ENCODE measurements at regions of chr17 and their contacts with region 1.

Region 1: DNA sequence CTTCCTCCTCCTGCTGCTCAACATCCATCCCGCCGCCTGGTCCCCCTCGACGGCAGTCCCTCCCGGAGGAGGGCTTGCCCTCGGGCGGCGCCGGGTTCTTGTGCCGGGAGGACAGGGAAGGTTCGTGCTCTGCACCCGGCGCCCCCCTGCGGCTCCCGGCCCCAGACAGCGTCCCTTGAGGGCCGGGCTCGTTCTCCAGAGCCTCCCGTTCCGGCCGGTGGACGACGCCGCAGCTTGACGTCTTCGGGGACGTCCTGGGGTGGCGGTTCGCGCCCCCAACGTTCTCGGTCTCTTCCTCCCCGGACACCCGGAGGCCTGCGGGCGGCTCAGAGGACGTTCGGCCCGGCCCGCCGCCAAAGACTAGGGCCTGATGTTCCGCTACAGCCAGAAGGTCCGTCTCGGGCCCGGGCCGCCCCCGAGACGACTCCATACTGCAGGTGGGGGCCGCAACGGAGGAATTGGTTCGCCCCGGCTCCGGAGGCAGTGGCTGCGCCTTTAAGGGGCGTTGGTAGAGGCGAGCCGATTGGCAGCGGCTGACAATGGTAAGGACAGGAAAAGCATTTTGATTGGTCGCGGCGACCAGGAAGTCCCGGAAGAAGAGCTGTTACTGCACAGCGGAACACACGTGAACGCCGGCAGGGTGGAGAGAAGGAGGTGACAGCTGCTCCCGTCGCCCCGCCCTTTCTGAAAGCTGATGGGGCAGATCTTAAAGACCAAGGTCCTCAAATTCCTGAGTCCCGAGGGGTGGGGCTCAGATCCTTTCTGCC is at the start of gene BORCS6:
- DNase-seq: peak; percentile 72 to 97 (median 82)
- ATAC-seq: peak; percentile 80
- H3K4me3 ChIP-seq: peak within 1 kb of the TSS; percentile 88
- H3K27ac ChIP-seq: peak within 1 kb of the TSS; percentile 85
- H3K4me1 ChIP-seq: peaks cover 31 to 39% of the 10 kb centered on the region in 2 experiments
- H3K27me3 ChIP-seq: no peaks in the 10 kb centered on the region
- CTCF ChIP-seq: peak in 1 of 3 experiments; percentile 0; a peak in 1 of 6 replicates
- EP300 ChIP-seq: no peak
- POLR2A ChIP-seq: peak; percentile 73
- RAD21 ChIP-seq: no peak
- polyA plus RNA-seq, gene BORCS6: 0.01 to 0.08 TPM

Region 2: DNA sequence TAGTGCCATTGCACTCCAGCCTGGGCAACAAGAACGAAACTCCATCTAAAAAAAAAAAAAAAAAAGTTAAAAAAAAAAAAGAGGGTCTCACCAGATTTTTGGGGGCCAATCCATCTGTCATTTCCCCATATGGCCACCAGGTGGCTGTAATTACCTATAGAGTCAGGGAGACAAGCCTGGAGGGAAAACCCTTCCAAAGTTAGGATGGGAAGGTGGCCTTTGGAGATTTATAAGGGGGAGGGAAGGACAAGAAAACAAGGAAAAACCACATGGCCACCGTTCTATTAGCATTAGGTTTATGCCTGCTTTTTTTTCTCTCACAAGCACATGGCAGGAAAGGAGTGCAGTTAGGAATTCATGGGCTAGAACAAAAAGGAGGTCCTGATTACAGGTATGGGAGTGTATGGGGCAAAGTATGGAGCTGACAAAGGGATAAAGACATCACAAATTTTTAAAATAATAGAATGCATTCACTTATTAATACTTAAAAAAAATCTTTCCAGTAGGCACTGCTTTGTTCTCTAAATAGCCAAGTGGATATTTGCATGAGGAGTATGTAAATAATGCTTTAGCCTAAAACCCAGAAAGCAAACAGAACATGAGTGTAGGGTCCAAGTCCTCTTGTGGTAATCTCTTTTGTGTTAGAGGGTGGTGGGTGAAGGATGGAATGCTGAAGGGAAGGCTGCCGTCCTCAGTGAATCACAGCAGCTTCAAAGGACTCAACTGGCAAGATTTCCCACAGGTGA is 327.0 kb before region 1 on chr17:
- CTCF ChIA-PET with region 1: no interaction called
- POLR2A ChIA-PET with region 1: no interaction called
- in situ Hi-C with region 1: no loop called
- intact Hi-C with region 1: no loop called
- DNase-seq: peak; percentile 30 to 48 (median 41)
- ATAC-seq: no peak
- H3K4me3 ChIP-seq: no peak overlapping the region
- H3K27ac ChIP-seq: no peak overlapping the region
- H3K4me1 ChIP-seq: peaks cover 6 to 10% of the 10 kb centered on the region in 2 experiments; a peak in 4 of 5 replicates
- H3K27me3 ChIP-seq: no peaks in the 10 kb centered on the region
- CTCF ChIP-seq: peak; percentile 53 to 69 (median 60)
- EP300 ChIP-seq: no peak
- POLR2A ChIP-seq: no peak
- RAD21 ChIP-seq: peak; percentile 55 to 69

Region 3: DNA sequence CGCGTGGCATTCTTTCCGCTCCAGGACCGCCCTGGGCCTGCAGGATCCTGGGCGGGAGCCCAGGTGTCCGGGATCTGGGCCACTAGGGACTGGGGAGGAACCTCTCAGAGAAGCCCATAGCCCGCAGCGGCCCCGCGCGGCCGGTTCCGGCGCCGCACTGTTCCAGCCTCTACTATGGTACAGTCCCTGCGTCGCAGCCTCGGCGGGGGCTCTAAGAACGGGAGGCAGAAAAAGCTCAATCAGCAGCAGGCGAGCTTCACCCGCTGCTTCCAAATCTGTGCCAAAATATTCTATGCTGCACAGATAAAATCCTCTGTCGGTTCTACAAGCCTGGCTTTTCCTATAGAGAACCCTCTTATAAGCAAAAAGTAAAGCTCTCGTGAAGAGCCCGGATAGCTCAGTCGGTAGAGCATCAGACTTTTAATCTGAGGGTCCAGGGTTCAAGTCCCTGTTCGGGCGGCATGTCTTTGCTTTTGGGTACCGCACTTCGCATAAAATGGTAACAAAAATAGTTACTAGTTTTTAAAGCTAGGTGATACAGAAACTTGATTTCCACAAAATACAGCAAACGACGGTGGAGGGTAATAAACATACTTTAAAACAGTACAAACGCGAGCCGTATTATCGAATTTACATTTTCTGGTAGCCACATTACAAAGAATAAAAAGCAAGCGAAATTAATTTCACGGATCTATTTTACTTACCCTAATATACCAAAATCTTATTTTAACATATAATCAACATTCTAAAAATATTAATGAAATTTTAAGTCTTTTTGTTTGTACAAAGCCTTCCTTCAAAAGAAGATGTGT is 70.9 kb before region 1 on chr17:
- CTCF ChIA-PET with region 1: no interaction called
- POLR2A ChIA-PET with region 1: interaction called, 4 read pairs
- in situ Hi-C with region 1: no loop called
- intact Hi-C with region 1: loop called (anchors 1 kb)
- DNase-seq: peak; percentile 73 to 85 (median 76)
- ATAC-seq: peak; percentile 81
- H3K4me3 ChIP-seq: peak overlapping the region; percentile 65
- H3K27ac ChIP-seq: peak overlapping the region; percentile 63; the same call in 2 of the 3 replicates
- H3K4me1 ChIP-seq: peaks cover 20 to 43% of the 10 kb centered on the region in 2 experiments
- H3K27me3 ChIP-seq: peaks cover 14 to 41% of the 10 kb centered on the region in 2 experiments
- CTCF ChIP-seq: peak; percentile 77 to 89 (median 87)
- EP300 ChIP-seq: peak; percentile 32; the same call in 1 of the 2 replicates
- POLR2A ChIP-seq: no peak
- RAD21 ChIP-seq: peak; percentile 52 to 68

Region 4: GRCh38 chr17:8204761-8205555 is 15.1 kb after region 1 on chr17:
- CTCF ChIA-PET with region 1: no interaction called
- POLR2A ChIA-PET with region 1: interaction called, 30 read pairs
- in situ Hi-C with region 1: no loop called
- intact Hi-C with region 1: loop called (anchors 1 kb)
- DNase-seq: no peak
- ATAC-seq: no peak; the same call in 2 of the 3 replicates
- H3K4me3 ChIP-seq: no peak overlapping the region
- H3K27ac ChIP-seq: no peak overlapping the region
- H3K4me1 ChIP-seq: peaks cover 3 to 18% of the 10 kb centered on the region in 2 experiments; a peak in 4 of 5 replicates
- H3K27me3 ChIP-seq: no peaks in the 10 kb centered on the region
- CTCF ChIP-seq: no peak
- EP300 ChIP-seq: no peak
- POLR2A ChIP-seq: peak; percentile 54
- RAD21 ChIP-seq: no peak

Region 5: DNA sequence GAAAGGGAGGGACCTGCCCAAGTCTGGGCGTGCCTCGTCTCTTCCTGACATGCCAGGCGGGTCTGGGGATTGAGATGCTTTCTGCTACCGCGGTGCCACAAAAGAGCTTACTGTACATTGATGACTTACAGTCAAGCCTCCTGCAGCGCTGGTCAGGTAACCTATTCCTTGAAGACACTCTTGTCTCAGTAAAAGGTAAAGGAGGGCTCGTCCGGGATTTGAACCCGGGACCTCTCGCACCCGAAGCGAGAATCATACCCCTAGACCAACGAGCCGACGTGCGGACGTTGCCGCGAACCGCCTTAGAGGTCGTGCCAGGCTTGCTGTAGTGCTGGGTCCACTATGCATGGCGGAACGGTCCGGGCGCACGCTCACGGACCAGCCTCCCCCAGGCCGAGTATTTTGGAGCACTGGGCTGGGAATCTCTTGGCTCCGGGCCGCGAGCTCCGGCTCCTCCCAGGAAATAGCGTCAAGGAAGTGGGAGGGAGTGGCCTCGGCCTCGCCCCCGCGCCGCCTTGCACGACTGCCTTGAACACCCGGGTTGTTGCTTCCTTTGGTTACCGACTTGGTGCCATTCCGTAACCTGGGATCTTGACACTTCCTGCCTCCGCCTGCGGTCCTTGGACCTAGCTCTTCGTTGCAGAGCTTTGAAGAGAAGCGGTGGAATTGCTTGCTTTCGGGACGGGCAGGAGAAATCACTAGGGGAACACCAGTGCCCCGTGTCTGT is 32.9 kb after region 1 on chr17:
- CTCF ChIA-PET with region 1: interaction called, 5 read pairs
- POLR2A ChIA-PET with region 1: interaction called, 10 read pairs
- in situ Hi-C with region 1: no loop called
- intact Hi-C with region 1: loop called (anchors 1 kb)
- DNase-seq: peak; percentile 50 to 90 (median 60)
- ATAC-seq: peak; percentile 54
- H3K4me3 ChIP-seq: peak overlapping the region; percentile 60
- H3K27ac ChIP-seq: peak overlapping the region; percentile 91
- H3K4me1 ChIP-seq: peaks cover 27 to 30% of the 10 kb centered on the region in 2 experiments; a peak in 4 of 5 replicates
- H3K27me3 ChIP-seq: no peaks in the 10 kb centered on the region
- CTCF ChIP-seq: no peak
- EP300 ChIP-seq: no peak
- POLR2A ChIP-seq: peak; percentile 85
- RAD21 ChIP-seq: no peak

Region 6: GRCh38 chr17:8300627-8301242 is 110.8 kb after region 1 on chr17:
- CTCF ChIA-PET with region 1: no interaction called
- POLR2A ChIA-PET with region 1: no interaction called
- in situ Hi-C with region 1: no loop called
- intact Hi-C with region 1: loop called (anchors 10 kb)
- DNase-seq: peak; percentile 62 to 73 (median 65)
- ATAC-seq: peak; percentile 93
- H3K4me3 ChIP-seq: no peak overlapping the region
- H3K27ac ChIP-seq: no peak overlapping the region
- H3K4me1 ChIP-seq: peaks cover 4 to 7% of the 10 kb centered on the region in 2 experiments; a peak in 4 of 5 replicates
- H3K27me3 ChIP-seq: no peaks in the 10 kb centered on the region
- CTCF ChIP-seq: peak; percentile 75 to 81 (median 81)
- EP300 ChIP-seq: no peak
- POLR2A ChIP-seq: no peak
- RAD21 ChIP-seq: peak; percentile 59 to 86